ENCODE measurements at regions of chr19 and their contacts with region 1.

Region 1: GRCh38 chr19:11380653-11381534 is 3.2 kb downstream of the EPOR start:
- DNase-seq: peak; percentile 65
- H3K4me3 ChIP-seq: peak overlapping the region; percentile 75
- CTCF ChIP-seq: peak; percentile 80

Region 2: DNA sequence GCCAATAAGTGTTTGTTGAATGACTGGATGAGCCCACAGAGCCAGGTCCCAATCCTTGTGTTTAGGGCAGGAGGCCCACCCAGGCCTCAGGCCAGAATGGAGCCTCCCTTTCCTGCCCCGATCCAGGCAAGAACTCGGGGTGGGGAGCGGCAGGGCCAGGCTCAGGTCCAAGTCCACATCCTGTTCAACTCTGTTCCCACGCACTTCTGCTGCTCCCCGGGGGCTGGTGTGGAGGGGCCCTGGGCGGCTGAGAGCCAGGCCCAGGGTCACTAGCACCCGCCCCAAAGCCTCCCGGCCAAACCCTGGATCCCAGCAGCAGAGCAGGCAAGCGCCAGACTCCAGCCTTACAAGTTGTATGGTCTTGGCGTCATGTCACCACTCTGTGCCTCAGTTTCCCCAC is 133.5 kb before region 1 on chr19:
- CTCF ChIA-PET with region 1: no interaction called
- POLR2A ChIA-PET with region 1: no interaction called
- DNase-seq: no peak
- H3K4me3 ChIP-seq: no peak overlapping the region
- CTCF ChIP-seq: no peak

Region 3: GRCh38 chr19:11339254-11340098 is 41.4 kb before region 1 on chr19 and contains the start of gene RAB3D:
- CTCF ChIA-PET with region 1: interaction called, 15 read pairs
- POLR2A ChIA-PET with region 1: no interaction called
- DNase-seq: no peak
- H3K4me3 ChIP-seq: peak within 1 kb of the TSS; percentile 68
- CTCF ChIP-seq: no peak

Region 4: DNA sequence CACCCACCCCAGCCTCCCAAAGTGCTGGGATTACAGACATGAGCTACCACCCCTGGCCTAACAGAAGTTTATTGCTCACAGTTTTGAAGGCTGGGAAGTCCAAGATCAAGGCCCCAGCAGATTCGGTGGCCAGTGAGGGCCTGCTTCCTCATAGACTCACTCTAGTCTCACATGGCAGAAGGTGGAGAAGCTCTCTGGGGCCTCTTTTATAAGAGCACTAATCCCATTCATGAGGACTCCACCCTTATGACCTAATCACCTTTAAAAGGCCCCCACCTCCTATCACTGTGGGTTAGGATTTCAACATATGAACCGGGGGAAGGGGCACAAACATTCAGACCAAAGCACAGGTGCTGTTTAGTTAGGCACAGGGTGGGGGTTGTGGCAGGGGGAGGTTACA is 13.4 kb before region 1 on chr19:
- CTCF ChIA-PET with region 1: interaction called, 17 read pairs
- POLR2A ChIA-PET with region 1: interaction called, 4 read pairs
- DNase-seq: no peak
- H3K4me3 ChIP-seq: no peak overlapping the region
- CTCF ChIP-seq: no peak

Region 5: DNA sequence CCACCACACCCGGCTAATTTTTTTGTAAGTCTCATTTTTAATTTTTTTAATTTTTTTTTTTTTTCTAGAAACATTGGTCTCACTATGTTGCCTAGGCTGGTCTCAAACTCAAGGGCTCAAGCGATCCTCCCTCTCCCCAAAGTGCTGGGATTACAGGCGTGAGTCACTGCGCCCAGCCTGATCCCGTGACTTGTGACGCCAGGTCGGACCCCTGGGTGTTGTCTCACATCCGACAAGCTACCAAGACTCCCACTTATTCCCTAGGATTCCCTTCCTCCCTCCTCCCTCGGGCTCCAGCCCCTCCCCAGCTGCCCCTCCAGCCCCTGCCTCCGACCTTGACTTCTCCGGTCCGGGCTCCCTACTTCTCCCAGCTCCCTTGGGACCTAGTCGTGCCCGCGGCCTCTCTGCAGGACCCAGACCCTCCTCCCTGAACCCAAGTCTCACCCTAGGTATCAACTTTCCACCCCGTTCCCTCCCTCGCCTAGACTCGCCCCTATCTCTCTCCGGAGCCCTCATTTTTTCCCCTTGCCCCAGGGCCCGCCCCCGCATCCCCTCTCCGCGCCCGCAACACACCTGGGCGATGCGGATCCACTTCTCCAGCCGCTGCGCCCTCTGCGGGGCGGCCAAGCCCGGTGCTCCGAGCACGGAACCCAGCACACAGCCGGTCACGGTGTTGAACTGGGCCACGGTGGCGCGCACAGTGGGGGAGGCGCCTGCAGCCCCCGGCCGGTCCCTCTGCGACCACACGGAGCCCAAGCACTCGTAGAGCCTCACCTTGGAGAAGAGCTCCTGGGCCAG is 25.2 kb after region 1 on chr19:
- CTCF ChIA-PET with region 1: interaction called, 42 read pairs
- POLR2A ChIA-PET with region 1: no interaction called
- DNase-seq: no peak
- H3K4me3 ChIP-seq: no peak overlapping the region
- CTCF ChIP-seq: peak; percentile 58

Region 6: DNA sequence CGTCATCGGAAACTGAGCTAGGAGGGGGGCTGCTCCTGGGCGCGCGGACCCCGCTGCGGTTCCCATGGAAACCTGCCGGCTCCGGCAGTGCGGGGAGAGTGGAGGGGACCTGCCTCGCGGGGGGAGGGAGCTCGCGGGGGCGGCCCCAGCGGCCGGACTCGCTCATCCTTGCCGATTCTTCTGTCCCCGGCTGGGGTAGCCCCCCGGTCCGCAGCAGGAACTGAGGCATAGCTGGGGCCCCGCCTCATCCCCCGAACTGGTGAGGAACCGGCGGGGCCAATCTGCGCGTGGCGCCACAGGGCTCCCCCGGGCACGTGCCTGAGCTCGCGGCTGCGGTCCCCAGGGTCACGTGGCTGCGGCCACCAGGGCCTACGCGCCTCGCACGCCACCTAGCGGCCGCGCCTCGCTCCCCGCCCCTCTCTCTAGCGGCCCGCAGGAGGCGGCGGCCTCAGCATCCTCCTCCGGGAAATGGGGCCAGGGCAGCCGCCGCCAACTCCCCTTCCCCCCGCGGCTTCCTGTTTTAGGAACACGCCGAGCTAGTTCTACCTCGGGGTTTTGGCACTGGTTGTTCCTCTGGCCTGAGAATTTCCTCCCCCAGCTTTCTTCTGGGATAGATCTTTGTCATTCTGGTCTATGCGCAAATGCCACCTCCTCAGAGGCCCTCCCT is 101.6 kb after region 1 on chr19:
- CTCF ChIA-PET with region 1: interaction called, 14 read pairs
- POLR2A ChIA-PET with region 1: no interaction called
- DNase-seq: peak; percentile 9
- H3K4me3 ChIP-seq: peak overlapping the region; percentile 54
- CTCF ChIP-seq: peak; percentile 98